ENCODE measurements at regions of chr21 and their contacts with region 1.

Region 1: GRCh38 chr21:41630249-41630648 is 122.3 kb upstream of the TMPRSS2 start:
- DNase-seq: peak; percentile 87 to 100
- H3K4me3 ChIP-seq: no peak overlapping the region
- H3K27ac ChIP-seq: peak overlapping the region; percentile 94
- H3K4me1 ChIP-seq: peaks cover 50% of the 10 kb centered on the region
- H3K27me3 ChIP-seq: no peaks in the 10 kb centered on the region
- CTCF ChIP-seq: no peak

Region 2: GRCh38 chr21:41656962-41657516 is 26.8 kb after region 1 on chr21:
- CTCF ChIA-PET with region 1: no interaction called
- POLR2A ChIA-PET with region 1: interaction called, 3 read pairs
- intact Hi-C with region 1: loop called (anchors 2 kb)
- DNase-seq: peak in 1 of 2 experiments; percentile 68
- H3K4me3 ChIP-seq: no peak overlapping the region
- H3K27ac ChIP-seq: no peak overlapping the region
- H3K4me1 ChIP-seq: peaks cover 69% of the 10 kb centered on the region
- H3K27me3 ChIP-seq: no peaks in the 10 kb centered on the region
- CTCF ChIP-seq: no peak

Region 3: GRCh38 chr21:41706678-41707077 is 76.4 kb after region 1 on chr21:
- CTCF ChIA-PET with region 1: no interaction called
- POLR2A ChIA-PET with region 1: interaction called, 4 read pairs
- intact Hi-C with region 1: loop called (anchors 2 kb)
- DNase-seq: peak in 1 of 2 experiments; percentile 80
- H3K4me3 ChIP-seq: no peak overlapping the region
- H3K27ac ChIP-seq: peak overlapping the region; percentile 93
- H3K4me1 ChIP-seq: peaks cover 79% of the 10 kb centered on the region
- H3K27me3 ChIP-seq: no peaks in the 10 kb centered on the region
- CTCF ChIP-seq: no peak

Region 4: GRCh38 chr21:41761211-41762181 is 131.2 kb after region 1 on chr21:
- CTCF ChIA-PET with region 1: interaction called, 5 read pairs
- POLR2A ChIA-PET with region 1: interaction called, 3 read pairs
- intact Hi-C with region 1: loop called (anchors 1 kb)
- DNase-seq: peak; percentile 87 to 91
- H3K4me3 ChIP-seq: peak overlapping the region; percentile 100
- H3K27ac ChIP-seq: peak overlapping the region; percentile 99
- H3K4me1 ChIP-seq: peaks cover 44% of the 10 kb centered on the region
- H3K27me3 ChIP-seq: no peaks in the 10 kb centered on the region
- CTCF ChIP-seq: no peak

Region 5: DNA sequence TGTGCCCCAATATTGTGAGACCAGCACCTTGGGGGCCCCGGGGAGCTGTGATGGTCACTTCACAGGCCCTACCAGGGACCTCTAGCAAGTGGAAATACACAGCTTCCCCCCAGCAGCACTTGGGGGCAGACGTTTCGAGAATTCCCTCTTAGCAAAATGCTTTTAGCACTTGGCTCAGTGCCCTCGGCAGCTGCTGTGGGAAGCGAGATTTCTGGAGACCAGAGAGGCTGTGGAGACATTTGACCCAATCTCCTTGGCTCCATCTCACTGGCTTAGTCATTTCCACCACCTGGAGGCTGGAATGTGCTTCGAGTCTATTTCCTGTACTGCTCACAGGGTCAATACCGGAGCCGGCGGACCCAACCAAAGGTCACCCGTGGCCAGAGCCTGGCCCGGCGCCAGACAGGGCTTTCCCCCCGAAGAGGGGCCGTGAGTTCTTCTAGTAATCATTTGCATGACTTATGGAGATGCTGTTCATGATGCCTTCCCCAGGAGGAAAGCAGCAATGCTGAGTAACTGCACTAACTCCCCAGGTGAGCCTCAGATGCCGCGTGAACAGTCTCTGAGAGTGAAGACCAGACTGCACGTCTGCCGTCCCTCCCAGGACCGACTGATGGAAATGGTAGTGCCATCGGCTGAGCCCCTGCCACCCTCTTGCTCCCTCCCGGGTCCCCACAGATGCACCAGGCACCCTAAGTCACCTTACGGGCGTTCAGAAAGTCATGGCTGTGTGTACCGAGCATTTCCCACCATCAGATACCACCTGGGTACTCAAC is 327.9 kb after region 1 on chr21:
- CTCF ChIA-PET with region 1: no interaction called
- POLR2A ChIA-PET with region 1: no interaction called
- intact Hi-C with region 1: loop called (anchors 1 kb)
- DNase-seq: peak; percentile 85 to 93
- H3K4me3 ChIP-seq: no peak overlapping the region
- H3K27ac ChIP-seq: peak overlapping the region; percentile 86
- H3K4me1 ChIP-seq: peaks cover 54% of the 10 kb centered on the region
- H3K27me3 ChIP-seq: no peaks in the 10 kb centered on the region
- CTCF ChIP-seq: peak; percentile 55; the same call in 1 of the 2 replicates

Region 6: GRCh38 chr21:42806509-42807140 is 1176.4 kb after region 1 on chr21:
- CTCF ChIA-PET with region 1: no interaction called
- POLR2A ChIA-PET with region 1: no interaction called
- intact Hi-C with region 1: no loop called
- DNase-seq: no peak
- H3K4me3 ChIP-seq: no peak overlapping the region
- H3K27ac ChIP-seq: no peak overlapping the region
- H3K4me1 ChIP-seq: no peaks in the 10 kb centered on the region
- H3K27me3 ChIP-seq: no peaks in the 10 kb centered on the region
- CTCF ChIP-seq: no peak